Stomach (tissue), 19 donors: ENCODE measurements at regions of chr18 and their contacts with region 1.

Region 1: GRCh38 chr18:70431203-70431624 is 142.4 kb downstream of the SOCS6 start:
- DNase-seq: no peak
- H3K4me3 ChIP-seq: no peak overlapping the region
- H3K27ac ChIP-seq: no peak overlapping the region
- H3K4me1 ChIP-seq: peaks cover 0 to 10% (median 6%) of the 10 kb centered on the region in 4 donors
- H3K27me3 ChIP-seq: no peaks in the 10 kb centered on the region
- CTCF ChIP-seq: no peak
- EP300 ChIP-seq: no peak
- POLR2A ChIP-seq: no peak

Region 2: DNA sequence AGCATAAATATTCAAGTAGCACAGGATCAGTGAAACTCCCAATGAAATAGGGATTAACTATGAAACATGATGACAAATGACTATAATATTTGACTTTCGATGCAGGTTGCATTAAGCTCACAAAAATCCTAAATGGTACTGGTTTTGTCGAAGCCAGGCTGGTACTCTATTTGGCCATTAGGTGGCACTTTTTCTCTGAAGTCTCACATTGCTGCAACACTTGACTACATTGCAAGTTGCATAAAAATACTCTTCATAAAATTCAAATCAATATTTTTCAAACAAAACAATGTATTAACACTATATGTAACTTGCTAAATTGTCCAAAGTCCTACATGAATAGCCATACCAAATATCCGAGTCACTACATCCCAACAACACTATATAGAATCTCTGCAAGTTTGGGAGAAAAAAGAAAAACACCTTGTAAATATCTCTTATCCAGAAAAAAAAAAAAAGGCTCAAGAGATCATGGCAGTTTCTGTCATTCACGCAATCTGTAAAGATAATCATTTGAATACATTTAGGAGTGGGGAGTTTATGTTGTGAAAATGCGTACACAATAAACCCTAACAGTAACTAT is 235.3 kb before region 1 on chr18:
- intact Hi-C with region 1: loop called (anchors 5 kb)
- DNase-seq: peak in 1 of 2 donors; percentile 66
- H3K4me3 ChIP-seq: no peak overlapping the region
- H3K27ac ChIP-seq: no peak overlapping the region
- H3K4me1 ChIP-seq: no peaks in the 10 kb centered on the region
- H3K27me3 ChIP-seq: no peaks in the 10 kb centered on the region
- CTCF ChIP-seq: peak in 5 of 7 experiments; percentile 29 to 70 (median 65)
- EP300 ChIP-seq: no peak
- POLR2A ChIP-seq: no peak